ENCODE measurements at regions of chr3 and their contacts with region 1.

Region 1: GRCh38 chr3:110400315-110400714 is 671.3 kb upstream of the NECTIN3 start:
- DNase-seq: no peak
- ATAC-seq: no peak
- H3K4me3 ChIP-seq: no peak overlapping the region
- H3K27ac ChIP-seq: no peak overlapping the region
- H3K4me1 ChIP-seq: no peaks in the 10 kb centered on the region
- H3K27me3 ChIP-seq: no peaks in the 10 kb centered on the region
- CTCF ChIP-seq: no peak
- POLR2A ChIP-seq: no peak
- RAD21 ChIP-seq: no peak

Region 2: GRCh38 chr3:110352841-110353604 is 47.3 kb before region 1 on chr3:
- CTCF ChIA-PET with region 1: no interaction called
- POLR2A ChIA-PET with region 1: no interaction called
- dilution Hi-C with region 1: no loop called
- in situ Hi-C with region 1: no loop called
- intact Hi-C with region 1: loop called (anchors 5 kb)
- DNase-seq: peak; percentile 56
- ATAC-seq: peak; percentile 48
- H3K4me3 ChIP-seq: no peak overlapping the region
- H3K27ac ChIP-seq: no peak overlapping the region
- H3K4me1 ChIP-seq: peaks cover 6% of the 10 kb centered on the region
- H3K27me3 ChIP-seq: no peaks in the 10 kb centered on the region
- CTCF ChIP-seq: no peak
- POLR2A ChIP-seq: no peak
- RAD21 ChIP-seq: no peak

Measured in IMR-90 (cell line).